AG04449 (cell line): ENCODE measurements at regions of chr13 and their contacts with region 1.

Region 1: GRCh38 chr13:59771272-59771671 is 392.5 kb downstream of the DIAPH3 start:
- DNase-seq: no peak
- H3K4me3 ChIP-seq: no peak overlapping the region
- CTCF ChIP-seq: peak; percentile 61

Region 2: DNA sequence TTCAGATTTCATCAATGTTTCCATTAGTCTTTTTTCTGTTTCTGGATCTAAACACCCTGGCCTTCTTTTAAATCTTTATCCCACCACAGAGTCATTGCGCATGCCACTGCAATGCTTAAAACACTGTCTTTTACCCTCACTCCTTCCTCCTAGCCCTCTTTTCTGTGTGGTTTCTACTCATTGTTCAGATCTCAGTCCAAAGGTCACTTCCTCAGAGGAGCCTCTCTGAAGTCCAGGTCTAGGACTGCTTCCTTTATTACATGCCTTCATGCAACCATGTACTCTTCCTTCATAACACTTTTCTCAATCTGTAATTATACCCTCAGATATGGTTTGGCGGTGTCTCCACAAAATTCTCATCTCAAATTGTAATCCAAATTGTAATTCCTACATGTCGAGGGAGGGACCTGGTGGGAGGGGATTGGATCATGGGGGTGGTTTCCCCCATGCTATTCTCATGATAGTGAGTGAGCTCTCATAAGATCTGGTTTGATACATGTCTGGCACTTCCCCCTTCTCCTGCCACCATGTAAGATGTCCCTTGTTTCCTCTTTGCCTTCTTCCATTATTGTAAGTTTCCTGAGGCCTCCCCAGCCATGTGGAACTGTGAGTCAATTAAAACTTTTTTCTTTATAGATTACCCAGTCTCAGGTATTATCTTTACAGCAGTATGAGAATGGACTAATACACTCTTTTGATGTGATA is 416.5 kb before region 1 on chr13:
- CTCF ChIA-PET with region 1: no interaction called
- POLR2A ChIA-PET with region 1: no interaction called
- DNase-seq: no peak
- H3K4me3 ChIP-seq: no peak overlapping the region
- CTCF ChIP-seq: no peak

Region 3: DNA sequence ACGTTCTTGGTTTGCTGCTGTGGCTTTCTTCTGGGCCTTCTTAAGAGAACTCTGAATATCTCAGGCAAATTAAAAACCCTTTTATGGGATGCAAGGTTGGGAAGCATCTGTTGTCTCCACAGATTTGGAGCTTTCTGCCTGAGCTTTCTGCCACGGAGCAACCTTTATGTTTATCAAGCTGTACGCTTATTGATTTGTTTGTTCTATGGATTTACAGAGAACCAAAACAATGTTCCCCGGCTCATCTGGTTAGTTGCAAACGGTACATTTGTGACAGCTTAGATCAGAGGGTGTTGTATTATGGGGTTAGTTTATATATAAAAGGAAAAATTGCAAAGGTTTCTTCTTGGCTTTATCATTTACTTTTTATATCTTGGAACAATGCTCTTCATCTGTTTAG is 87.2 kb before region 1 on chr13:
- CTCF ChIA-PET with region 1: interaction called, 125 read pairs
- POLR2A ChIA-PET with region 1: no interaction called
- DNase-seq: no peak
- H3K4me3 ChIP-seq: no peak overlapping the region
- CTCF ChIP-seq: no peak

Region 4: GRCh38 chr13:59745392-59745788 is 25.9 kb before region 1 on chr13:
- CTCF ChIA-PET with region 1: interaction called, 21 read pairs
- POLR2A ChIA-PET with region 1: no interaction called
- DNase-seq: no peak
- H3K4me3 ChIP-seq: no peak overlapping the region
- CTCF ChIP-seq: no peak

Region 5: GRCh38 chr13:59782696-59783095 is 11.4 kb after region 1 on chr13:
- CTCF ChIA-PET with region 1: interaction called, 17 read pairs
- POLR2A ChIA-PET with region 1: no interaction called
- DNase-seq: no peak
- H3K4me3 ChIP-seq: no peak overlapping the region
- CTCF ChIP-seq: no peak